ENCODE measurements at regions of chr17 and their contacts with region 1.

Region 1: GRCh38 chr17:1365445-1366039 is 34.5 kb downstream of the YWHAE start:
- DNase-seq: peak; percentile 74 to 80 (median 78)
- H3K4me3 ChIP-seq: no peak overlapping the region
- H3K4me3 Mint-ChIP-seq: peak overlapping the region in 3 of 8 donors; percentile 21 to 31 (median 26)
- H3K27ac ChIP-seq: peak overlapping the region; percentile 23
- H3K27ac Mint-ChIP-seq: peak overlapping the region; percentile 57 to 89 (median 76)
- H3K4me1 ChIP-seq: peaks cover 77% of the 10 kb centered on the region
- H3K4me1 Mint-ChIP-seq: peaks cover 40 to 79% (median 53%) of the 10 kb centered on the region in 4 donors
- H3K27me3 ChIP-seq: no peaks in the 10 kb centered on the region
- H3K27me3 Mint-ChIP-seq: no peaks in the 10 kb centered on the region

Region 2: GRCh38 chr17:996554-997344 is 368.8 kb before region 1 on chr17 and contains the start of gene TIMM22:
- CTCF ChIA-PET with region 1: no interaction called
- POLR2A ChIA-PET with region 1: no interaction called
- intact Hi-C with region 1: no loop called
- DNase-seq: peak; percentile 94 to 95 (median 95)
- H3K4me3 ChIP-seq: peak within 1 kb of the TSS; percentile 84 to 99
- H3K4me3 Mint-ChIP-seq: peak within 1 kb of the TSS; percentile 96 to 99 (median 98)
- H3K27ac ChIP-seq: peak within 1 kb of the TSS; percentile 83
- H3K27ac Mint-ChIP-seq: peak within 1 kb of the TSS; percentile 96 to 99 (median 99)
- H3K4me1 ChIP-seq: peaks cover 18% of the 10 kb centered on the region
- H3K4me1 Mint-ChIP-seq: peaks cover 13 to 34% (median 22%) of the 10 kb centered on the region in 4 donors
- H3K27me3 ChIP-seq: no peaks in the 10 kb centered on the region
- H3K27me3 Mint-ChIP-seq: no peaks in the 10 kb centered on the region
- total RNA-seq, gene TIMM22: 12.3 to 13.2 TPM

Region 3: GRCh38 chr17:1379930-1380313 is 14.4 kb after region 1 on chr17:
- CTCF ChIA-PET with region 1: interaction called, 22 read pairs
- POLR2A ChIA-PET with region 1: interaction called, 4 read pairs
- intact Hi-C with region 1: no loop called
- DNase-seq: peak in 2 of 5 donors; percentile 38 to 81
- H3K4me3 ChIP-seq: no peak overlapping the region
- H3K4me3 Mint-ChIP-seq: peak overlapping the region; percentile 33 to 84 (median 58)
- H3K27ac ChIP-seq: peak overlapping the region; percentile 10
- H3K27ac Mint-ChIP-seq: peak overlapping the region; percentile 33 to 90 (median 84)
- H3K4me1 ChIP-seq: peaks cover 93% of the 10 kb centered on the region
- H3K4me1 Mint-ChIP-seq: peaks cover 48 to 88% (median 63%) of the 10 kb centered on the region in 4 donors
- H3K27me3 ChIP-seq: no peaks in the 10 kb centered on the region
- H3K27me3 Mint-ChIP-seq: no peaks in the 10 kb centered on the region

Region 4: DNA sequence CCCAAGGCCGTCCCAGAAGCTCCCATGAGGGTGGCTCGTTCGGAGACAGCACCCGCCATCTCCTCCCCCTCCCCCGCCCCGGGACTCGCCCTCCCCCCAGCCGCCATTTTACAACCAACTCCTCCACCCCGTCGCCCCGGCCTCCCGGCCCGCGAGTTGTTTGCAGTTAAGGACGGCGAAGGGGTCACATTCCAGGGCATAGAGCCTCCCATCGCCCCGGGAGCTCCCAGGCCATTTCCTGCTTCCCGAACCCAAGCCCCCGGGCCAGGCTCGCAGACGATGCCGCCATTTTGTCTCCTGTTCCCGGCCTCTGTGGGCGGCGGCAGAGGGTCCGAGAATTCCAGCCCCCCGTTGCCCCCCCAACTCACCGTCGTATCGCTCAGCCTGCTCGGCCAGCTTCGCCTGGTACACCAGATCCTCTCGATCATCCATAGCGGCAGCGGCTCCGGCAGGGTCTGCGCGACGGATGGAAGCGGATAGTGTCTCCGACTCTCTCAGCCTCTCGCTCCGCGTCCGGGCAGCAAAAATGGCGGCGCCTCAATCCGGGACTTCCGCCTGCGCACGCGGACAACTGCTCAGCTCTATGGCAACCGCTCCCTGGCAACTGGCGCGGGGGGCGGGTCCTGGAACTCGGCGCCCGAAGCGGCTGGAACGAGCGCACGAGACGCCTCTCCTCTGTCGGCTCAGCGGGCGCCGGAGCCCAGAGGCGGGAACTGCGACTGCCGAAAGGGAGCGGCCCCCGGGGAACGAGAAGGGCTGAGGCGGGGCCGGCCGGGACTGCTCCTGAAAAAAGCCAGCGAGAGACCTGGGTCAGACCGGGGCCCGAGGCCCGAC is 34.4 kb after region 1 on chr17 and contains the start of gene YWHAE:
- CTCF ChIA-PET with region 1: interaction called, 20 read pairs
- POLR2A ChIA-PET with region 1: interaction called, 15 read pairs
- intact Hi-C with region 1: loop called (anchors 2 kb)
- DNase-seq: peak; percentile 93 to 96 (median 94)
- H3K4me3 ChIP-seq: peak within 1 kb of the TSS; percentile 76 to 100
- H3K4me3 Mint-ChIP-seq: peak within 1 kb of the TSS; percentile 96 to 99 (median 98)
- H3K27ac ChIP-seq: peak within 1 kb of the TSS; percentile 95
- H3K27ac Mint-ChIP-seq: peak within 1 kb of the TSS; percentile 97 to 100 (median 98)
- H3K4me1 ChIP-seq: peaks cover 41% of the 10 kb centered on the region
- H3K4me1 Mint-ChIP-seq: peaks cover 23 to 42% (median 33%) of the 10 kb centered on the region in 4 donors
- H3K27me3 ChIP-seq: no peaks in the 10 kb centered on the region
- H3K27me3 Mint-ChIP-seq: peaks cover 0 to 3% of the 10 kb centered on the region in 2 donors
- total RNA-seq, gene YWHAE: 142 to 143 TPM

Region 5: DNA sequence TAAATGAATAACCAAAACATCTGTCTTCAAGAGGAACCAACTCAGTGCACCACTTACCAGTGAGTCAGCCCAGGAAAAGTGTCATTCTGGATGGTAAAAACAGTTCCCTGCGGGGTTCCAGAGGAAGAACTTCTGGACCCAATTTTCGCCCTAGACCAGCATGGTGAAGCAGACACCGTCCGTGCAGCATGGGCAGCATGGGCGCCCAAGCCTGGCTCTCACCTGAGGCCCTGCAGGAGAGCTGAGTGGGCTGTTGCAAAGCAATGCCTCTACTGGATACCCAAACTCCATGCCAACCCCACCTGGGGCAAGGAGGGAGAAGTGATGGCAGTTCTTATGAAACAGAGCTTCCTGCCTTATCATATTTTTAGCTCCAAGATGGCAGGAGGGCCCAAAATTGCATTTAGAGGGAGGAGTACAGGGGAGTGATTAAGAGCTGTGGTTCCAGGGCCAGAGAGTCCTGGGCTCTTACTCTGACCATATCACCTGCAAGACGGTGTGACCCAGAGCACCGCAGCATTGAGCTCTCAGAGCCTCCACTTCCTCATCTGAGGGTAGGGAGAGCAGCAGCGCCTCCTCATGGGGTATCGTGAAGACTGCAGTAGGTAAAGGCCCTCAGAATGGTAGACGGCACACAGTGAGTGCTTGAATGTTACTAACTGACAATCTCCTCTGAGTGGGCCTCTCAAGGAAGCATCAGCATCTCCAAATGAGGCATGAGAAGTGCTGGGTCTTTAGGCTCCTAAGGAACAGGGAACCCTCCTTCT is 167.5 kb after region 1 on chr17:
- CTCF ChIA-PET with region 1: interaction called, 29 read pairs
- POLR2A ChIA-PET with region 1: interaction called, 3 read pairs
- intact Hi-C with region 1: no loop called
- DNase-seq: peak; percentile 37 to 58 (median 44)
- H3K4me3 ChIP-seq: no peak overlapping the region
- H3K4me3 Mint-ChIP-seq: no peak overlapping the region
- H3K27ac ChIP-seq: no peak overlapping the region
- H3K27ac Mint-ChIP-seq: peak overlapping the region in 4 of 7 donors; percentile 27 to 85 (median 58)
- H3K4me1 ChIP-seq: no peaks in the 10 kb centered on the region
- H3K4me1 Mint-ChIP-seq: peaks cover 0 to 4% (median under 1%) of the 10 kb centered on the region in 4 donors
- H3K27me3 ChIP-seq: no peaks in the 10 kb centered on the region
- H3K27me3 Mint-ChIP-seq: no peaks in the 10 kb centered on the region

Region 6: GRCh38 chr17:1724506-1725362 is 359.2 kb after region 1 on chr17 and contains the start of gene WDR81:
- CTCF ChIA-PET with region 1: no interaction called
- POLR2A ChIA-PET with region 1: no interaction called
- intact Hi-C with region 1: no loop called
- DNase-seq: peak; percentile 81 to 87 (median 84)
- H3K4me3 ChIP-seq: peak within 1 kb of the TSS; percentile 11 to 72
- H3K4me3 Mint-ChIP-seq: peak within 1 kb of the TSS; percentile 70 to 85 (median 82)
- H3K27ac ChIP-seq: peak within 1 kb of the TSS; percentile 64
- H3K27ac Mint-ChIP-seq: peak within 1 kb of the TSS; percentile 81 to 96 (median 89)
- H3K4me1 ChIP-seq: peaks cover 64% of the 10 kb centered on the region
- H3K4me1 Mint-ChIP-seq: peaks cover 16 to 69% (median 34%) of the 10 kb centered on the region in 4 donors
- H3K27me3 ChIP-seq: no peaks in the 10 kb centered on the region
- H3K27me3 Mint-ChIP-seq: no peaks in the 10 kb centered on the region
- total RNA-seq, gene WDR81: 36.3 to 40.3 TPM